ENCODE measurements at regions of chr12 and their contacts with region 1.

Region 1: GRCh38 chr12:40248585-40249297 is 23.9 kb downstream of the LRRK2 start:
- DNase-seq: no peak
- ATAC-seq: peak; percentile 87
- H3K4me3 ChIP-seq: no peak overlapping the region
- H3K27ac ChIP-seq: no peak overlapping the region
- H3K4me1 ChIP-seq: peaks cover 6% of the 10 kb centered on the region; the same call in 1 of the 2 replicates
- H3K27me3 ChIP-seq: no peaks in the 10 kb centered on the region
- CTCF ChIP-seq: no peak
- EP300 ChIP-seq: no peak
- POLR2A ChIP-seq: no peak
- RAD21 ChIP-seq: no peak

Region 2: GRCh38 chr12:40152783-40153383 is 95.9 kb before region 1 on chr12:
- CTCF ChIA-PET with region 1: interaction called, 13 read pairs
- POLR2A ChIA-PET with region 1: no interaction called
- RAD21 ChIA-PET with region 1: interaction called, 10 read pairs
- SMC1A ChIA-PET with region 1: interaction called, 6 read pairs
- in situ Hi-C with region 1: no loop called
- intact Hi-C with region 1: no loop called
- DNase-seq: no peak
- ATAC-seq: peak; percentile 78
- H3K4me3 ChIP-seq: no peak overlapping the region
- H3K27ac ChIP-seq: no peak overlapping the region
- H3K4me1 ChIP-seq: no peaks in the 10 kb centered on the region
- H3K27me3 ChIP-seq: no peaks in the 10 kb centered on the region
- CTCF ChIP-seq: peak; percentile 50 to 69 (median 66); a peak in 5 of 6 replicates
- EP300 ChIP-seq: no peak
- POLR2A ChIP-seq: no peak
- RAD21 ChIP-seq: peak; percentile 84

Region 3: GRCh38 chr12:40261937-40262336 is 13.2 kb after region 1 on chr12:
- CTCF ChIA-PET with region 1: interaction called, 4 read pairs
- POLR2A ChIA-PET with region 1: interaction called, 11 read pairs
- RAD21 ChIA-PET with region 1: interaction called, 16 read pairs
- SMC1A ChIA-PET with region 1: interaction called, 48 read pairs
- in situ Hi-C with region 1: no loop called
- intact Hi-C with region 1: no loop called
- DNase-seq: no peak
- ATAC-seq: peak; percentile 84
- H3K4me3 ChIP-seq: no peak overlapping the region
- H3K27ac ChIP-seq: no peak overlapping the region
- H3K4me1 ChIP-seq: peaks cover 13% of the 10 kb centered on the region
- H3K27me3 ChIP-seq: no peaks in the 10 kb centered on the region
- CTCF ChIP-seq: no peak
- EP300 ChIP-seq: peak; percentile 50 to 72
- POLR2A ChIP-seq: no peak
- RAD21 ChIP-seq: no peak